ENCODE measurements at regions of chr7 and their contacts with region 1.

Region 1: GRCh38 chr7:111089822-111090426 is 1.0 kb upstream of the LRRN3 start:
- DNase-seq: no peak
- ATAC-seq: peak; percentile 54 to 70
- H3K4me3 ChIP-seq: no peak overlapping the region
- H3K27ac ChIP-seq: no peak overlapping the region
- H3K4me1 ChIP-seq: peaks cover 16 to 37% of the 10 kb centered on the region in 2 donors
- H3K27me3 ChIP-seq: no peaks in the 10 kb centered on the region
- CTCF ChIP-seq: peak; percentile 37 to 81 (median 47)
- POLR2A ChIP-seq: no peak

Region 2: GRCh38 chr7:111486472-111487142 is 396.7 kb after region 1 on chr7:
- in situ Hi-C with region 1: loop called (anchors 5 to 10 kb)
- intact Hi-C with region 1: loop called (anchors 1 kb)
- DNase-seq: no peak
- ATAC-seq: no peak
- H3K4me3 ChIP-seq: no peak overlapping the region
- H3K27ac ChIP-seq: no peak overlapping the region
- H3K4me1 ChIP-seq: no peaks in the 10 kb centered on the region
- H3K27me3 ChIP-seq: no peaks in the 10 kb centered on the region
- CTCF ChIP-seq: peak; percentile 34 to 70 (median 64)
- POLR2A ChIP-seq: no peak

Region 3: GRCh38 chr7:111492234-111492633 is 402.3 kb after region 1 on chr7:
- in situ Hi-C with region 1: loop called (anchors 5 to 10 kb)
- intact Hi-C with region 1: no loop called
- DNase-seq: no peak
- ATAC-seq: no peak
- H3K4me3 ChIP-seq: no peak overlapping the region
- H3K27ac ChIP-seq: no peak overlapping the region
- H3K4me1 ChIP-seq: no peaks in the 10 kb centered on the region
- H3K27me3 ChIP-seq: no peaks in the 10 kb centered on the region
- CTCF ChIP-seq: no peak
- POLR2A ChIP-seq: no peak

Region 4: GRCh38 chr7:111730476-111731300 is 640.8 kb after region 1 on chr7:
- in situ Hi-C with region 1: loop called in 3 of 4 experiments (anchors 5 to 25 kb)
- intact Hi-C with region 1: loop called (anchors 1 kb)
- DNase-seq: no peak
- ATAC-seq: no peak
- H3K4me3 ChIP-seq: no peak overlapping the region
- H3K27ac ChIP-seq: no peak overlapping the region
- H3K4me1 ChIP-seq: peaks cover 5 to 7% of the 10 kb centered on the region in 2 donors
- H3K27me3 ChIP-seq: no peaks in the 10 kb centered on the region
- CTCF ChIP-seq: peak in 1 of 5 experiments; percentile 10
- POLR2A ChIP-seq: no peak

Region 5: GRCh38 chr7:111735661-111736551 is 646.0 kb after region 1 on chr7:
- in situ Hi-C with region 1: loop called in 3 of 4 experiments (anchors 5 to 25 kb)
- intact Hi-C with region 1: loop called (anchors 1 kb)
- DNase-seq: peak; percentile 49 to 50
- ATAC-seq: peak; percentile 92
- H3K4me3 ChIP-seq: no peak overlapping the region
- H3K27ac ChIP-seq: peak overlapping the region; percentile 30 to 38 (median 35)
- H3K4me1 ChIP-seq: peaks cover 6 to 14% of the 10 kb centered on the region in 2 donors
- H3K27me3 ChIP-seq: no peaks in the 10 kb centered on the region
- CTCF ChIP-seq: peak; percentile 57 to 91 (median 79)
- POLR2A ChIP-seq: no peak

Measured in gastrocnemius medialis (tissue), 4 donors.